ENCODE measurements at regions of chr6 and their contacts with region 1.

Region 1: GRCh38 chr6:55980627-55981211 is 105.3 kb upstream of the BMP5 start:
- DNase-seq: peak in 1 of 2 donors; percentile 3
- H3K4me3 ChIP-seq: no peak overlapping the region
- H3K27ac ChIP-seq: no peak overlapping the region
- H3K4me1 ChIP-seq: no peaks in the 10 kb centered on the region
- H3K27me3 ChIP-seq: no peaks in the 10 kb centered on the region
- CTCF ChIP-seq: peak in 5 of 6 experiments; percentile 39 to 71 (median 61)
- POLR2A ChIP-seq: no peak

Region 2: GRCh38 chr6:56021943-56022342 is 41.2 kb after region 1 on chr6:
- intact Hi-C with region 1: no loop called
- DNase-seq: no peak
- H3K4me3 ChIP-seq: no peak overlapping the region
- H3K27ac ChIP-seq: no peak overlapping the region
- H3K4me1 ChIP-seq: no peaks in the 10 kb centered on the region
- H3K27me3 ChIP-seq: no peaks in the 10 kb centered on the region
- CTCF ChIP-seq: no peak
- POLR2A ChIP-seq: no peak

Region 3: DNA sequence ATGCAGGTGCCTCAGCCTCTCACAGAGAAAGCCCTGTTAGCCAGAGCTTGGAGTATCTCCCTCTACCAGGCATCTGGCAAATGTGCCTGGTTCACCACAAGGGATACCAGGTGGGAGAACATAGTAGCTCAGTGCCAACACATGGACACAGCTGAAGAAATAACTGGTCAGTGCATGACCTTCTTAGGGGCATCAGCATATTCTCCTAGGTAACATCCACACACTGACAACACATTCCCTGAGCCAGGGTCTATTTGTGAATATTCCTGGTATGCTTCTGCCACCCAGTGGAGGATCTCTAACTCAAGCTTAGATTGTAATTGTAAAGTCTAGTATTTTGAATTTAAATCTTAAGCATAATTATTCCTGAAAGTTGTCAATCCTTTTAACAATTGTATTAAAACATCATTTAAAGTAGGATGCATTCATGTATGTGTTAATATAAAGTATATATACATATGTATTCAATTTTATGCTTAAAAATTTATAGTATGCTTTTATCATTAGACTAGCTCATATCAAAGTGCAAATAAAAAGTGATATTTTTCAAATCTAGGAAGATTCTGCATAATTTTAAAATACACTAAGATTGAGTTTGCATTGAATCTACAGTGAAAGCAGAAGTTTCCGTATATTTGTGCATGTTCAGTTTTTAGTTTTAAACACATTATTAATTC is 311.9 kb after region 1 on chr6:
- intact Hi-C with region 1: loop called (anchors 5 kb)
- DNase-seq: peak in 1 of 2 donors; percentile 11
- H3K4me3 ChIP-seq: no peak overlapping the region
- H3K27ac ChIP-seq: no peak overlapping the region
- H3K4me1 ChIP-seq: no peaks in the 10 kb centered on the region
- H3K27me3 ChIP-seq: no peaks in the 10 kb centered on the region
- CTCF ChIP-seq: peak in 4 of 6 experiments; percentile 47 to 79 (median 54)
- POLR2A ChIP-seq: no peak

Region 4: GRCh38 chr6:56314683-56315523 is 334.2 kb after region 1 on chr6:
- intact Hi-C with region 1: no loop called
- DNase-seq: peak; percentile 18 to 31
- H3K4me3 ChIP-seq: no peak overlapping the region
- H3K27ac ChIP-seq: no peak overlapping the region
- H3K4me1 ChIP-seq: peaks cover 0 to 3% of the 10 kb centered on the region in 2 donors
- H3K27me3 ChIP-seq: no peaks in the 10 kb centered on the region
- CTCF ChIP-seq: peak; percentile 41 to 76 (median 64)
- POLR2A ChIP-seq: no peak

Measured in thyroid gland (tissue), 4 donors.